ENCODE measurements at regions of chr14 and their contacts with region 1.

Region 1: DNA sequence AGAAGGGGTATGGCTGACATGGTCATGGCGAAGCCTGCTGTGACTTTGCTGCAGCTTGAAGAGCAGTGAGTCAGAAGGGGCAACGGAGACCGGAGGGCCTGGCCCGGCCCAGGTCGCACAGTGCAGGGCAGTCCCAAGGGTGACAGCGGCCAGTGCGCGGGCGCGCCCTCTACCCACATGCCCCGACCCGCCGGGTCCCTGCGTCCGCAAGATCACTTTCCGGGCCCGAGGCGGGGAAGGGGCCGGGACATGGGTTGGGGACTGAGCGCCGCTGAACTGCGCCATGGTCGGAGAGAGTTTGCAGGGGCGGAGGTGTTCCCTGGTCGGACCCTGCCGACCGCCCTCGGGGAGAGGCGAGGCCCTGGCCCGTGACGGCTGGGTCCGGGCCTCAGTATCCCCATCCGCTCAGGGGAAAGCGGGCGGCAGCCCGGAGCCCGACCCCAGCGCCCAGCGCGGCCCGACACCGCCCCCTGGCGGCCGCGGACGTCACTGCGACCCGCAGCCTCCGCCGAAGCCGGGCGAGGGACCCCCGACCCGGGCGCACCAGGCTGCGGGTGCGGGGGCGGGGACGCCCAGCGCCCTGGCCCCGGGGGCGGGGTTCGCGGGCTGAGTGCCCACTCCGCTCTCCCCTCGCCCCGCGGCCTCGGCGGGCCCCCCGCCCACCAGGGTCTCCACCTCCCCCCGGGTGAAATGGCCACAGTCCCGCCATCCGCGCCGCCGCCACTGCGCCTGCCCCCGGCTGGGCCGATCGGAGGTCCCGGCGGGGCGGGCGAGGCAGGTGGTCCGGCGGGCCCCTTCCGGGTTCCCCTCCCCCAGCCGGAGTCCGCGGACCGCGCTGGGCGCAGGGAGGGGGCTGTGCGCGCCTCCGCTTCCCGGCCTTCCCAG is 7.2 kb upstream of the ANKRD9 start:
- DNase-seq: peak in 1 of 2 donors; percentile 73
- ATAC-seq: peak; percentile 75 to 84 (median 79)
- H3K4me3 ChIP-seq: peak overlapping the region; percentile 42 to 94 (median 74)
- H3K27ac ChIP-seq: peak overlapping the region in 8 of 10 donors; percentile 44 to 83 (median 62)
- H3K4me1 ChIP-seq: peaks cover 0 to 13% (median 5%) of the 10 kb centered on the region in 9 donors
- H3K27me3 ChIP-seq: no peaks in the 10 kb centered on the region
- CTCF ChIP-seq: peak; percentile 74 to 100 (median 87)

Region 2: GRCh38 chr14:102125546-102125945 is 391.2 kb before region 1 on chr14:
- intact Hi-C with region 1: no loop called
- DNase-seq: no peak
- ATAC-seq: no peak
- H3K4me3 ChIP-seq: no peak overlapping the region
- H3K27ac ChIP-seq: no peak overlapping the region
- H3K4me1 ChIP-seq: no peaks in the 10 kb centered on the region
- H3K27me3 ChIP-seq: no peaks in the 10 kb centered on the region
- CTCF ChIP-seq: no peak

Region 3: DNA sequence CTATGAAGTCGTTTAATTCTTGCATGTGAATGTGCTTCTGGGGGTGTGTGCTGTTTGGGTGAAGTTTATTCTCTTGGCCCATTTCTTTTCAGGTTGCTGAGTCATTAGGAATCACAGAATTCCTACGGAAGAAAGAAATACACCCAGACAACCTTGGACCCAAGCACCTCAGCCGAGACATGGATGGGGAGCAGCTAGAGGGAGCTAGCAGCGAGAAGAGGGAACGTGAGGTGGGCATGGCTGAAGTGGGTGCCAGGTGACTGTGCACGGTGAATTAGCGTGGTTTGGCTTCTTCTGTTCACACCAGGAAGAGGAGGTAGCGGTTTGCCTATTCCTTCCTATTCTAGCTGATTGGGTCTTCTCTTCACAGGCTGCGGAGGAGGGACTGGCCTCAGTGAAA is 178.0 kb before region 1 on chr14:
- intact Hi-C with region 1: no loop called
- DNase-seq: no peak
- ATAC-seq: no peak
- H3K4me3 ChIP-seq: no peak overlapping the region
- H3K27ac ChIP-seq: no peak overlapping the region
- H3K4me1 ChIP-seq: peaks cover 0 to under 1% (median 0%) of the 10 kb centered on the region in 9 donors
- H3K27me3 ChIP-seq: no peaks in the 10 kb centered on the region
- CTCF ChIP-seq: no peak

Region 4: DNA sequence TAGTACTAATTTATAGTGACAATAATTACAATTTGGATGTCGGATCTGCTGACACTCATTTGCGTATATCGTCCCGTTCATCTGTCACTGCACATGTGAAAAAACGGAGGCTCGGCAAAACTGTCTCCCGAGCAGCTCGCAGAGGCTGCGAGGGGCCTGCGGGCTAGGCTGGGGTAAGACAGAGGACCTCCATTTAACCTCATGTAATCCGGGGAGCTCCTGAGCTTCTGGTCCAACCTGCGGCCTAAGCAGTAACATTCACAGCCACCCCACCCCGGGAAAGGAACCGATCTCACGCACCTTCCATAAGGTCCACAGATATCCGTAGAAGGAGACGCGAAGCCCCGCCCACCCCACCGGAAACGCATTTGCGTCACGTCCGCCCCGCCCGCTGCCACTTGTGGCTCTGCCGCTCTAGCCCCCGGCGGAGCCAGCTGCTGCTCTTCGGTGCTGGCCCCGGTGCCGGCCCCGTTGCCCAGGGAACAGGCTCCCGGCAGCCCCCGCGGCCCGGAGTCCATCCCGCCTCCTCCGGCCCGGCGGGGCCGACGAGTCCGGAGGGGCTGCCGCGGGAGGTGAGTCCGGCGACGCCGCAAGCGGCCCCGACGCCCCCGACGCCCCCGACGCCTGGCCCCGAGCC is 154.1 kb before region 1 on chr14 and contains the starts of genes CINP and TECPR2:
- intact Hi-C with region 1: loop called in 1 of 10 experiments (anchors 5 kb)
- DNase-seq: peak; percentile 98 to 99
- ATAC-seq: peak; percentile 98 to 100 (median 99)
- H3K4me3 ChIP-seq: peak within 1 kb of the TSS; percentile 64 to 95 (median 86)
- H3K27ac ChIP-seq: peak within 1 kb of the TSS; percentile 68 to 96 (median 94)
- H3K4me1 ChIP-seq: peaks cover 0 to 41% (median 25%) of the 10 kb centered on the region in 9 donors
- H3K27me3 ChIP-seq: no peaks in the 10 kb centered on the region
- CTCF ChIP-seq: no peak
- total RNA-seq, gene CINP: 26.6 to 36.7 (median 31.0) TPM
- total RNA-seq, gene TECPR2: 20.1 to 34.2 (median 25.3) TPM

Region 5: DNA sequence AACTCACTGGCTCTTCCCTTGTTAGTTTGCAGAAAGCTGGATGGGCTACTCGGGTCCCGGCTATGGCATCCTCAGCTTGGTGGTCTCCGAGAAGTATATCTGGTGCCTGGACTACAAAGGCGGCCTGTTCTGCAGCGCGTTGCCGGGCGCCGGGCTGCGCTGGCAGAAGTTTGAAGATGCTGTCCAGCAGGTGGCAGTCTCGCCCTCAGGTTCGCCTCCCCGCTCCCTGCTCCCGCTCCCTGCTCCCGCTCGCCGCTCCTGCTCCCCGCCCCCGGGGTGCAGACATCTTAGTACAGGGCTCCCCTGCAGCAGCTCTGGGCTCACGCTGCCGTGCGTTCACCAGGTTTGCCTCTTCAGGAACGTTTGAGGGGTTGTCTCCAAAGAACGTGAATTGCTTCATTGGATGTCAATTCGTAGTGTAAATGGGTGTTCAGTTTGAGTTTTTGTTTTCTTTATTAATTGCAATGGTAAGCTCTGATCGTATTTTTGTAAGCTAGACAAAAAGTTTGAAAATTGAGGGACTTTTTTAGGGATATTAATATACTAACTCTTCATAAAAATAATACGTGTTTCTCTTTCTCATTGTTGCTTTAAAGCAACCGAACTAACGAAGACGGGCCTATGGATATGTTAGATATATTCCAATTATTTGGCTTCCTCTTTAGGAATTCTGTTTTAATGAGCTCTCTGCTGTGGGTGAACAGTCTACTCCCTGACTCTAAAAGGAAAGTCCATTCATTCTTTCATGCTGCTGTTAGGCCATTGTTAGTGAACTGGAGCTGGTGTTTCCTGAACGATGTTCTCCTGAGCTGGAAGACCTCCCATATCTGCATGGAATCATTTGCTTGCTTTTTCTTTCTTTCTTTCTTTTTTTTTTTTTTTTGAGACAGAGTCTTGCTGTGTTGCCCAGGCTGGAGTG is 78.5 kb before region 1 on chr14:
- intact Hi-C with region 1: loop called (anchors 1 to 2 kb)
- DNase-seq: peak; percentile 90
- ATAC-seq: peak; percentile 93 to 98 (median 96)
- H3K4me3 ChIP-seq: peak overlapping the region in 7 of 10 donors; percentile 16 to 42 (median 26)
- H3K27ac ChIP-seq: no peak overlapping the region
- H3K4me1 ChIP-seq: peaks cover 0 to 11% (median 6%) of the 10 kb centered on the region in 9 donors
- H3K27me3 ChIP-seq: no peaks in the 10 kb centered on the region
- CTCF ChIP-seq: peak; percentile 69 to 92 (median 83)